ENCODE measurements at regions of chr10 and their contacts with region 1.

Region 1: GRCh38 chr10:52644373-52645186 is 128.0 kb downstream of the MBL2 start:
- DNase-seq: peak; percentile 79
- H3K4me3 ChIP-seq: no peak overlapping the region
- H3K27ac ChIP-seq: no peak overlapping the region
- H3K4me1 ChIP-seq: no peaks in the 10 kb centered on the region
- H3K27me3 ChIP-seq: no peaks in the 10 kb centered on the region
- CTCF ChIP-seq: peak; percentile 56 to 61
- POLR2A ChIP-seq: no peak

Region 2: DNA sequence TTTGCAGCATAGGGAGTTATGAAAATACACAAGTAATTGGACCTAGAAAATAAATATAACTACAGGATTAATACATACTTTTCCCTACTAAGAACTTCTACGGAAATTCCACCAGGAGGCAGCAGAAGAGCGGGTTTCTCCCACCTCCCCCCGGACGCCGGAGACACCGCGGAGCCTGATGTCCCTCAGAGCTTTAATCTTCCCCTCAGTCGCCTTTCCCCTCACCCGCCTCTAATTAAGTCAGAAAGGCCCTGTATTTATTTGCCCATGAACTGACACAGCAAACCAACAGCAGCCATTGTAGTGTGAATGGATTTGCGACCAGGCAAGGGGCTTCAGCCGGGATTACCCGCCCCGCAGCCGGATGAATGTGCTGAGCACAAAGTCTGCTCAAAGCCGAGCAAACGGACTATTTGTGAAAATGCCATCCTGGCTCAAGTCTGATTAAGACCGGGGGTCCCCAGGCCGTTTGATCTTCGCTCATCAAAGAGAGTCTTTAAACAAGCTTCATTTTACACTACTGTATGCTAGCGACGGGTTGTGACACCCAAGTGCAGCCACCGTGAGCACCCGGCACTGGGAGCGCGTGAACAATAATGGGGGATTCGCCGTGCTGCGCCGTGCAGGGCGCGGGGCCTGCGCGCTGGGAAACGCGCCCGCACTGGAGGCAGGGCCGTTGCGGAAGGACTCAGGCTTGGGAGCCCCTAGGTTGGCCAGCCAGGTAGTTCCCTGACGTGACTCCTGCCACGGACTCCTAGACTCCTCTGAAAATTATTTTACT is 336.1 kb before region 1 on chr10:
- CTCF ChIA-PET with region 1: interaction called, 55 read pairs
- POLR2A ChIA-PET with region 1: no interaction called
- dilution Hi-C with region 1: no loop called
- intact Hi-C with region 1: loop called (anchors 1 kb)
- DNase-seq: peak; percentile 86
- H3K4me3 ChIP-seq: peak overlapping the region; percentile 9 to 65 (median 55)
- H3K27ac ChIP-seq: peak overlapping the region; percentile 55
- H3K4me1 ChIP-seq: peaks cover 9% of the 10 kb centered on the region
- H3K27me3 ChIP-seq: no peaks in the 10 kb centered on the region
- CTCF ChIP-seq: peak; percentile 61 to 72
- POLR2A ChIP-seq: no peak

Region 3: GRCh38 chr10:52483587-52483986 is 161.0 kb before region 1 on chr10:
- CTCF ChIA-PET with region 1: no interaction called
- POLR2A ChIA-PET with region 1: no interaction called
- dilution Hi-C with region 1: no loop called
- intact Hi-C with region 1: no loop called
- DNase-seq: no peak
- H3K4me3 ChIP-seq: no peak overlapping the region
- H3K27ac ChIP-seq: no peak overlapping the region
- H3K4me1 ChIP-seq: peaks cover 36% of the 10 kb centered on the region
- H3K27me3 ChIP-seq: no peaks in the 10 kb centered on the region
- CTCF ChIP-seq: no peak
- POLR2A ChIP-seq: no peak

Region 4: GRCh38 chr10:52668024-52668423 is 23.4 kb after region 1 on chr10:
- CTCF ChIA-PET with region 1: interaction called, 24 read pairs
- POLR2A ChIA-PET with region 1: no interaction called
- dilution Hi-C with region 1: no loop called
- intact Hi-C with region 1: no loop called
- DNase-seq: peak; percentile 86
- H3K4me3 ChIP-seq: no peak overlapping the region
- H3K27ac ChIP-seq: peak overlapping the region; percentile 81
- H3K4me1 ChIP-seq: peaks cover 13% of the 10 kb centered on the region
- H3K27me3 ChIP-seq: no peaks in the 10 kb centered on the region
- CTCF ChIP-seq: no peak
- POLR2A ChIP-seq: no peak

Region 5: GRCh38 chr10:52729271-52730104 is 84.9 kb after region 1 on chr10:
- CTCF ChIA-PET with region 1: interaction called, 223 read pairs
- POLR2A ChIA-PET with region 1: interaction called, 3 read pairs
- dilution Hi-C with region 1: no loop called
- intact Hi-C with region 1: loop called (anchors 1 kb)
- DNase-seq: peak; percentile 66
- H3K4me3 ChIP-seq: no peak overlapping the region
- H3K27ac ChIP-seq: no peak overlapping the region
- H3K4me1 ChIP-seq: peaks cover 3% of the 10 kb centered on the region
- H3K27me3 ChIP-seq: no peaks in the 10 kb centered on the region
- CTCF ChIP-seq: peak; percentile 30 to 39
- POLR2A ChIP-seq: no peak

Region 6: DNA sequence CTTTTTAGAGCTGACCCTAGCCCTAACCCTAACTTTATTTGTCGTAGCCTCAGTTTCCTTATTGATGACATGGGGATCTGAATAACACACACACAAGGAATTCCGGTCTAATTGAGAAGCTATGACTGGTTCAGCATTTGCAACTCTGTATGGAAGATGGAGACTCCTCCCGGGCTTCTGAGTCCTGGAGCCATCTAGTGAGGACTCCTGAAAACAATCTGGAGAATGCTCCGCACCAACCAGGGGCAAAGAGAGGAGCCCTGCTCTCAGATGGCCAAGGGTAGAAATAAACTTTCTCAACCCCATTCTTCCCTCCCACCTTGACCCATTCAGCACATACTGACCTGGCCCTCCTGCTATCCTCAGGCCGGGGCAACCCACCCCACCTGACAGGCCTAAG is 101.6 kb after region 1 on chr10:
- CTCF ChIA-PET with region 1: interaction called, 18 read pairs
- POLR2A ChIA-PET with region 1: no interaction called
- dilution Hi-C with region 1: no loop called
- intact Hi-C with region 1: loop called (anchors 1 kb)
- DNase-seq: peak; percentile 7
- H3K4me3 ChIP-seq: no peak overlapping the region
- H3K27ac ChIP-seq: no peak overlapping the region
- H3K4me1 ChIP-seq: no peaks in the 10 kb centered on the region
- H3K27me3 ChIP-seq: no peaks in the 10 kb centered on the region
- CTCF ChIP-seq: peak in 1 of 2 donors; percentile 29
- POLR2A ChIP-seq: no peak